Naive thymus-derived CD4-positive, alpha-beta T cell (primary cell): ENCODE measurements at regions of chr5 and their contacts with region 1.

Region 1: GRCh38 chr5:72920690-72921502 is 34.9 kb upstream of the FCHO2 start:
- DNase-seq: peak in 1 of 9 donors; percentile 1
- ATAC-seq: peak; percentile 50
- H3K4me3 ChIP-seq: no peak overlapping the region
- H3K4me3 Mint-ChIP-seq: no peak overlapping the region
- H3K27ac ChIP-seq: no peak overlapping the region
- H3K27ac Mint-ChIP-seq: no peak overlapping the region
- H3K4me1 ChIP-seq: no peaks in the 10 kb centered on the region
- H3K4me1 Mint-ChIP-seq: peaks cover 0 to 1% (median 0%) of the 10 kb centered on the region in 7 donors
- H3K27me3 ChIP-seq: no peaks in the 10 kb centered on the region
- H3K27me3 Mint-ChIP-seq: no peaks in the 10 kb centered on the region

Region 2: GRCh38 chr5:72847989-72848473 is 72.9 kb before region 1 on chr5:
- CTCF ChIA-PET with region 1: no interaction called
- POLR2A ChIA-PET with region 1: no interaction called
- intact Hi-C with region 1: no loop called
- DNase-seq: peak; percentile 67 to 86 (median 83)
- ATAC-seq: peak; percentile 94
- H3K4me3 ChIP-seq: peak overlapping the region; percentile 93
- H3K4me3 Mint-ChIP-seq: peak overlapping the region; percentile 92 to 99 (median 98)
- H3K27ac ChIP-seq: peak overlapping the region; percentile 86
- H3K27ac Mint-ChIP-seq: peak overlapping the region; percentile 93 to 98 (median 96)
- H3K4me1 ChIP-seq: peaks cover 24 to 31% of the 10 kb centered on the region in 2 donors
- H3K4me1 Mint-ChIP-seq: peaks cover 30 to 88% (median 64%) of the 10 kb centered on the region in 7 donors
- H3K27me3 ChIP-seq: no peaks in the 10 kb centered on the region
- H3K27me3 Mint-ChIP-seq: peaks cover 0 to 16% (median 0%) of the 10 kb centered on the region in 5 donors

Region 3: DNA sequence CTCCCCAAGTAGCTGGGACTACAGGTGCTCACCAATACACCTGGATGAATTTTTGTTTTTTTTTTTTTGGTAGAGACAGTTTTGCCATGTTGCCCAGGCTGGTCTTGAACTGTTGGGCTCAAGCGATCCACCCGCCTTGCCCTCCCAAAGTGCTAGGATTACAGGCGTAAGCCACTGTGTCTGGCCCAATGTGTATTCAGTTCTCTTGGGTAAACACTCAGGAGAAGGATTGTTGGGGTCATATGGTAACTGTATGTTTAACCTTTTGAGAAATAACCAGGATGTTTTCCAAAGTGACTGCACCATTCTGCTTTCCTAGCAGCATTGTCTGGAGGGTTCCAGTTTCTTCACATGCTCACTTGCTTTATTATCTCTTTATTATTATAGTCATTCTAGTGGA is 37.0 kb before region 1 on chr5:
- CTCF ChIA-PET with region 1: no interaction called
- POLR2A ChIA-PET with region 1: no interaction called
- intact Hi-C with region 1: no loop called
- DNase-seq: no peak
- ATAC-seq: no peak
- H3K4me3 ChIP-seq: no peak overlapping the region
- H3K4me3 Mint-ChIP-seq: no peak overlapping the region
- H3K27ac ChIP-seq: no peak overlapping the region
- H3K27ac Mint-ChIP-seq: peak overlapping the region in 1 of 9 donors; percentile 41
- H3K4me1 ChIP-seq: no peaks in the 10 kb centered on the region
- H3K4me1 Mint-ChIP-seq: peaks cover 0 to 12% (median 10%) of the 10 kb centered on the region in 7 donors
- H3K27me3 ChIP-seq: no peaks in the 10 kb centered on the region
- H3K27me3 Mint-ChIP-seq: no peaks in the 10 kb centered on the region

Region 4: DNA sequence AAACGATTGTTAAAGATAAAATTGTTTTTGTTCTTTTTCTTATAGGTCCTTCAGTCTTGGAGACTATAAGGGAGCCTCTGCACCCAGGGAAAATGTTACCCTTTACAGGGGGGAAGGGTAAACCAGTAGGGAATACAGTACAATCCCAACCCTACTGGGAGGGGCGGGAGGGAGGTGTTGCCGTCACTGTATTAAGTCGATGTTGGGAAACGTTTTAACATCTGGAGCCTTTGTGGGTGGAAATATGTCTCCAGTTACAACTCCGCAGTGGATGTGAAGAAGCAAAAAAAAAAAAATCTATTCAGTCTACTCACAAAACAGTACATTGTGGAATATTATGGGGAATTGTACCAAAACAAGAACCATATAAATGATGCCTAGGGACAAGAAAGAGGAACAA is 12.2 kb before region 1 on chr5:
- CTCF ChIA-PET with region 1: no interaction called
- POLR2A ChIA-PET with region 1: no interaction called
- intact Hi-C with region 1: loop called in 1 of 2 experiments (anchors 1 kb)
- DNase-seq: no peak
- ATAC-seq: no peak
- H3K4me3 ChIP-seq: no peak overlapping the region
- H3K4me3 Mint-ChIP-seq: no peak overlapping the region
- H3K27ac ChIP-seq: no peak overlapping the region
- H3K27ac Mint-ChIP-seq: peak overlapping the region in 1 of 9 donors; percentile 55
- H3K4me1 ChIP-seq: no peaks in the 10 kb centered on the region
- H3K4me1 Mint-ChIP-seq: peaks cover 0 to 1% (median 0%) of the 10 kb centered on the region in 7 donors
- H3K27me3 ChIP-seq: no peaks in the 10 kb centered on the region
- H3K27me3 Mint-ChIP-seq: no peaks in the 10 kb centered on the region

Region 5: GRCh38 chr5:73256862-73257261 is 336.0 kb after region 1 on chr5:
- CTCF ChIA-PET with region 1: no interaction called
- POLR2A ChIA-PET with region 1: no interaction called
- intact Hi-C with region 1: no loop called
- DNase-seq: no peak
- ATAC-seq: no peak
- H3K4me3 ChIP-seq: no peak overlapping the region
- H3K4me3 Mint-ChIP-seq: no peak overlapping the region
- H3K27ac ChIP-seq: no peak overlapping the region
- H3K27ac Mint-ChIP-seq: no peak overlapping the region
- H3K4me1 ChIP-seq: no peaks in the 10 kb centered on the region
- H3K4me1 Mint-ChIP-seq: no peaks in the 10 kb centered on the region
- H3K27me3 ChIP-seq: no peaks in the 10 kb centered on the region
- H3K27me3 Mint-ChIP-seq: peaks cover 24 to 75% (median 62%) of the 10 kb centered on the region in 5 donors

Region 6: DNA sequence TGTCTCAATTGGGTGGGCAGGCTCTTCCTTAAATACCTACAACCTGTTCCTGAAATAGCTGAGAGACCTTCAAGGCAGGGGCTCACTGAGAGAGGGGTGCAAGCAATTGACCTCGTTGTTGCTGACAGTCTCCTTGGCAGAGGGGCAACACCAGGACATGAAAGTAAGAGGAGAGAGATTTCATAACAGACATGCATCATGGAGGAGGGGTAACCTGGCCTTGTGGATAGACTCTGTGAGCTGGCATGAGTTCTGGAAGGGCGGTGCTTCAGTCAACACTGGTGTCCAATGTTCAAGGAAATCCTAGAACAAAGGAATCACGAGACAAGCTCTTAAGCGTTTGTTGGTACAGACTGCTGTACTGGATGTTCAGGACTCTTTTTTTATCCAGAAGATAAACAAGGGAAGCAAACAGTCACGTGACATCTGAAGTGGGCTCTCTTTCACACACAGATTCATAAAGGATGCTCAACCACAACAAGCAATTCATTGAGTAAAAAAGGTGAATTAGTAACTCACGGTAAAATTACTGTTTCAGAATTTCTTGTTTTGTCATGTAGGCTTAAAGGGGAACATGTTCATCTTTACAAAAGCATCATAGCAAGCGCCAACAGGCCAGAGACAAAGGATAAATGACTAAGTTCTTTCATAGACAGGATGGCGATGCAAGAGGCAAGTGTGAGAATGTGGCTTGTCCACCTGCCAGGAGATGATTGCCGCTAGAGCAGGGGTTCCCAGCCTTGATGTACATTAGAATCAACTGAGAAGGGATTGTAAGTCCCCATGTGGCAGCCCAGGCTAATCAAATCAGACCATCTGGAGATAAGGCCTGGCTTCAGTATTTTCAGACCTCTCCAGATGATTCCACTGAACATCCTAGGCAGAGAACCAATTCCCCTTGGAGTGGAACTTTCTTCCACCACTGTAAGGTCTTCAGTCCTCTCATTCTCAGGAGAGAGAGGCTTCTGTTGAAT is 623.8 kb after region 1 on chr5:
- CTCF ChIA-PET with region 1: no interaction called
- POLR2A ChIA-PET with region 1: no interaction called
- intact Hi-C with region 1: no loop called
- DNase-seq: no peak
- ATAC-seq: no peak
- H3K4me3 ChIP-seq: no peak overlapping the region
- H3K4me3 Mint-ChIP-seq: no peak overlapping the region
- H3K27ac ChIP-seq: no peak overlapping the region
- H3K27ac Mint-ChIP-seq: no peak overlapping the region
- H3K4me1 ChIP-seq: no peaks in the 10 kb centered on the region
- H3K4me1 Mint-ChIP-seq: peaks cover 0 to 12% (median 0%) of the 10 kb centered on the region in 7 donors
- H3K27me3 ChIP-seq: no peaks in the 10 kb centered on the region
- H3K27me3 Mint-ChIP-seq: peaks cover 7 to 32% (median 25%) of the 10 kb centered on the region in 5 donors